PC-9 (cell line): ENCODE measurements at regions of chr3 and their contacts with region 1.

Region 1: DNA sequence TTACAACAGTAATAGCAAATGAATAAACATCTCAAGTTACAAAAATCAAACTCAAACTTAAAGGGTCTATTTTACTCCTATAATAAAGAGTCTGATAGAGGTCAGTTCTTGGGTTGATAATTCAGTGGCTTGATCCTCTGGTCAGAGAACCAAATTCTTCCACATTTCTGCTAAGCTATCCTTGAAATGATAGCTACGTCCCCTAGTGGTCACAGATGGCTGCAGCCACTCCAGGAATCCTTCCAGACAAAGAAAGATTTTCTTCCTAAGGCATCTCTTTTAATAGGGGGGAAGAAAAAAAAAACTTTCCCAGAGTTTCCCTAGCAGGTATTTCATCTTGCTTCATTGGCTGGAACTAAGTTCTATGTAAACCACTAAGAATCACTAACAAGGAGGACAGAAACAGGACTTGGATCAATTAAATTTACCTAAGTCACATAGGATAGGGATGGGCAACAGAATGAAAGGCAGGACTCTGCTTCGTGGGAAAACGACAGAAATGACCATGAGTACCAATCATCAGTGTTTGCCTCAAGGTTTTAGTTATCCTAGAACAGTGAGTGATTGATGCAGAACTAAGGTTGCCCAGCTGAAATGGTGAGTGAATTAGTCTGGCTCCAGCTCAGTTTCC is 160.7 kb downstream of the STAC start:
- DNase-seq: peak in 1 of 2 experiments; percentile 20
- H3K4me3 ChIP-seq: no peak overlapping the region
- H3K27ac ChIP-seq: no peak overlapping the region
- H3K4me1 ChIP-seq: no peaks in the 10 kb centered on the region
- H3K27me3 ChIP-seq: no peaks in the 10 kb centered on the region
- CTCF ChIP-seq: peak; percentile 86

Region 2: DNA sequence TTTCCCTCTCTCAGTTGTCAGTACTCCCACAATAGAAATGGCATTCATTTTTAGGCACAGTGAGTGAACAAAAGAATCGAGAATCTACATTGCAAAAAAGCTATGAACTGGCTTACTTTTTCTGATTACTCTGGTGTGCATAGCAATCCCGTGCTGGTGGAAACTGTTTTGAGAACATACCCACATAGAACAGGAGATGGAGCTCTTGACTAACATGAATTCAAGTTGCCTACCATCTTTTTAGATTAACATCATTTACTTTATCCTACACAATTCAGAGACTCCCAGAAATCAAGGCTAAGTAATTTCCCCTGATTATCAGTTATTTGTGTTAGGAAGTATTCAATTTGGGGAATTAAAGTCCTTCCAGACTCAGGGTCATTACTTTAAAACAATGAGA is 575.1 kb before region 1 on chr3:
- CTCF ChIA-PET with region 1: no interaction called
- POLR2A ChIA-PET with region 1: no interaction called
- intact Hi-C with region 1: loop called (anchors 1 kb)
- DNase-seq: peak in 1 of 2 experiments; percentile 43
- H3K4me3 ChIP-seq: no peak overlapping the region
- H3K27ac ChIP-seq: no peak overlapping the region
- H3K4me1 ChIP-seq: no peaks in the 10 kb centered on the region
- H3K27me3 ChIP-seq: no peaks in the 10 kb centered on the region
- CTCF ChIP-seq: peak; percentile 66

Region 3: DNA sequence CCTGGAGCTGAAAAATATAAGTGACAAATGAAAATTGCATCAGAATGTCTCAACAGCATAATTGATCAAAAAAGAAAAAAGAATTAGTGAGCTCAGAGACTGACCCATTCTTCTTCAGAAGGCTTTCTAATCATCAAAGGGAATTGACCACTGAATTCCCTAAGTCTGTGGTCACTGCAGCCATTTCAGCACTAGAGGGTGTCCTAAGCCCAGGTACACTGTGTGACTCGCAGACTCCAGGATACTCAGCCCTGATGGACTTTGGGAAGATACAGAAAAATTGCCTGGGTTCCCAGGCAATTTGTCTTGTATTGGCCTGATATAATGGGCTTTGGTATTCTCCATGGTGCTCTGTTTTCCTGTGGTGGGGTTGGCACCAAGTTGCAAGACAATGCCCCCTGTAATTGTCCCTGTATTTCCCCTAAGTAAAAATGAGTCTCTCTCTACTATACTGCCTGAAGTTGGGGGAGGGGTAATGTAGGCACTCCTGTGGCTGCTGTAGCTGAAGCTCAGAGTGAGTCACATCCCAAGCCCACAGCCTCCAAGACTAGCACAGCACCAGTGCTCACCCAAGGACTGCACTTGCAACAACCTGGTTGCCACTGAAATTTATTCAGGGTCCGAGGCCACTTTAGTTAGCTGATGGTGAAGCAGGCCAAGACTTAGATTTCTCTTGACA is 416.7 kb before region 1 on chr3:
- CTCF ChIA-PET with region 1: no interaction called
- POLR2A ChIA-PET with region 1: no interaction called
- intact Hi-C with region 1: loop called (anchors 1 kb)
- DNase-seq: peak; percentile 40 to 58
- H3K4me3 ChIP-seq: no peak overlapping the region
- H3K27ac ChIP-seq: no peak overlapping the region
- H3K4me1 ChIP-seq: no peaks in the 10 kb centered on the region
- H3K27me3 ChIP-seq: no peaks in the 10 kb centered on the region
- CTCF ChIP-seq: peak; percentile 80

Region 4: GRCh38 chr3:36693670-36694069 is 152.7 kb after region 1 on chr3:
- CTCF ChIA-PET with region 1: no interaction called
- POLR2A ChIA-PET with region 1: no interaction called
- intact Hi-C with region 1: no loop called
- DNase-seq: no peak
- H3K4me3 ChIP-seq: no peak overlapping the region
- H3K27ac ChIP-seq: no peak overlapping the region
- H3K4me1 ChIP-seq: peaks cover 12% of the 10 kb centered on the region
- H3K27me3 ChIP-seq: no peaks in the 10 kb centered on the region
- CTCF ChIP-seq: no peak

Region 5: GRCh38 chr3:36707623-36708409 is 166.8 kb after region 1 on chr3:
- CTCF ChIA-PET with region 1: no interaction called
- POLR2A ChIA-PET with region 1: no interaction called
- intact Hi-C with region 1: loop called (anchors 5 kb)
- DNase-seq: peak; percentile 65 to 93
- H3K4me3 ChIP-seq: no peak overlapping the region
- H3K27ac ChIP-seq: peak overlapping the region; percentile 88
- H3K4me1 ChIP-seq: peaks cover 11% of the 10 kb centered on the region
- H3K27me3 ChIP-seq: no peaks in the 10 kb centered on the region
- CTCF ChIP-seq: peak; percentile 74